Natural killer cell (primary cell): ENCODE measurements at regions of chr3 and their contacts with region 1.

Region 1: GRCh38 chr3:155701882-155702465 is 42.9 kb downstream of the PLCH1 start:
- DNase-seq: peak in 1 of 2 donors; percentile 59
- ATAC-seq: peak in 1 of 3 donors; percentile 65
- H3K4me3 ChIP-seq: no peak overlapping the region
- H3K4me3 Mint-ChIP-seq: no peak overlapping the region
- H3K27ac ChIP-seq: no peak overlapping the region
- H3K27ac Mint-ChIP-seq: no peak overlapping the region
- H3K4me1 ChIP-seq: no peaks in the 10 kb centered on the region
- H3K4me1 Mint-ChIP-seq: no peaks in the 10 kb centered on the region
- H3K27me3 ChIP-seq: no peaks in the 10 kb centered on the region
- H3K27me3 Mint-ChIP-seq: peaks cover 6 to 13% of the 10 kb centered on the region in 2 donors
- CTCF ChIP-seq: peak; percentile 77

Region 2: DNA sequence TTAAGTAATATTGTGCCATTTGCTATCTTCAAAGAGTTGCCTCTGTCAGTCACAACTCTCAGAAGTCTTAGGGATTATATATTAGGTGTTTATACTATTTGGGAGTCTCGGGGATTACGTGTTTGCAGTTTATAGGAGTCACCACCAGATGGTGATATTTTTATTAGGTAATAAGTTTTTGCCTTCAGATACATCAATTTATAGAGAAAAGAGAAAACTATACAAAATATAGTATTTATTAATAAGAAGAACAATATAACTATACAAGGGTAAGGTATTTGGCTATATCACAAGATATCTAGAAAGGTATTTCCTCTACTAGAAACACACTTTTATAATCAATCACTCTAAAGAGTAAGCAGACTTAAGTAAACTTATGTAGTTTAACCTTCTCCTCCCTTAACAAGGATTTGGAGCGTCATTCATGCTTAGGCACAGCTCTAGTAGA is 1367.0 kb before region 1 on chr3:
- intact Hi-C with region 1: loop called (anchors 1 kb)
- DNase-seq: peak in 1 of 2 donors; percentile 62
- ATAC-seq: peak in 1 of 3 donors; percentile 55
- H3K4me3 ChIP-seq: no peak overlapping the region
- H3K4me3 Mint-ChIP-seq: no peak overlapping the region
- H3K27ac ChIP-seq: no peak overlapping the region
- H3K27ac Mint-ChIP-seq: no peak overlapping the region
- H3K4me1 ChIP-seq: no peaks in the 10 kb centered on the region
- H3K4me1 Mint-ChIP-seq: no peaks in the 10 kb centered on the region
- H3K27me3 ChIP-seq: peaks cover 4% of the 10 kb centered on the region
- H3K27me3 Mint-ChIP-seq: peaks cover 16 to 22% of the 10 kb centered on the region in 2 donors
- CTCF ChIP-seq: peak; percentile 72

Region 3: DNA sequence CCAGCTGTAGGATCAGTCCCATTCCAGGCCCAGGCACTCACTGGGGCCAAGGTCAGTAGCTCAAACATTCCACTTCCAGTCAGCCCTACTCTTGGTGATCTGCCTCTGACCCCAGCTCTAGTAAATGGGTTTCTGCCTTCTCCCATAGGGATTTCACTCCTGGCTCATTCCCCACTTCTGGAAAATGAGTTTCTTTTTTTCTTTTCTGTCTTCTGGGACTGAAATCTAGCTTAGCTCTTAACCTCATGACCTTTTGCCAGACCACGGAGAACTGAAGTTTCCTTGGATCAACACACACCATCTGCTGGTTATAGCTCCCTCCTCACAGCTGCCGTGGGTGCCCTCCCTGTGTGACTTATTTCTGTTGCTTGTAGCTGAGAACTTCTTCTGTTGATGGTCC is 600.6 kb before region 1 on chr3:
- intact Hi-C with region 1: no loop called
- DNase-seq: no peak
- ATAC-seq: no peak
- H3K4me3 ChIP-seq: no peak overlapping the region
- H3K4me3 Mint-ChIP-seq: no peak overlapping the region
- H3K27ac ChIP-seq: no peak overlapping the region
- H3K27ac Mint-ChIP-seq: no peak overlapping the region
- H3K4me1 ChIP-seq: no peaks in the 10 kb centered on the region
- H3K4me1 Mint-ChIP-seq: no peaks in the 10 kb centered on the region
- H3K27me3 ChIP-seq: no peaks in the 10 kb centered on the region
- H3K27me3 Mint-ChIP-seq: no peaks in the 10 kb centered on the region
- CTCF ChIP-seq: no peak

Region 4: DNA sequence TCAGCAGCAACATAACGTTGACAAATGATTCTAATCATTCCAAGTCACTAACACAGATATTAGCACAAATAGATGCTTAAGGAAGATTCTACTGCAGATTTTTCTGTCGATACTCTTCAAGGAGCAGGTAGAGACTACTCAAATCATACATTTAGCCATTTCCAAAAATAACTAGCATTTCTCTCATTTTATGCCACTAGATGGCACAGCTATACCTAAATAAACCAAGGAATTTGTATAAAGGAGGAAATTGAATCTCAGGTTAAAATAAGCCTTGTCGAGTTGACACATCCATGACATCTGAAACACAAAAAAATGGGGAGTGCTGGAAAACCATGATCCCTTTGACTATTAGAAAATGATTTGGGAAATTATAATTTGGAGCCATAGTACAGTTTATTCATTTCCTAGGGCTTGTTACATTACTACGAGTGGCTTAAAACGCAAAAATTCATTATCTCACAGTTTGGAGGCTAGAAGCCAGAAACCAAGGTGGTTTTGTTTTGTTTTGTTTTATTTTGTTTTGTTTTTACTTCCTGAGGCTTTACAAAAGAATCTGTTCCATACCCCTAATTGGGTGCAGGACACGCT is 349.0 kb before region 1 on chr3:
- intact Hi-C with region 1: loop called (anchors 2 kb)
- DNase-seq: peak in 1 of 2 donors; percentile 33
- ATAC-seq: no peak
- H3K4me3 ChIP-seq: no peak overlapping the region
- H3K4me3 Mint-ChIP-seq: no peak overlapping the region
- H3K27ac ChIP-seq: no peak overlapping the region
- H3K27ac Mint-ChIP-seq: no peak overlapping the region
- H3K4me1 ChIP-seq: no peaks in the 10 kb centered on the region
- H3K4me1 Mint-ChIP-seq: no peaks in the 10 kb centered on the region
- H3K27me3 ChIP-seq: no peaks in the 10 kb centered on the region
- H3K27me3 Mint-ChIP-seq: no peaks in the 10 kb centered on the region
- CTCF ChIP-seq: no peak